ENCODE measurements at regions of chr20 and their contacts with region 1.

Region 1: GRCh38 chr20:24992487-24993205 is at the start of gene APMAP:
- DNase-seq: peak; percentile 91 to 93
- ATAC-seq: peak; percentile 81 to 88
- H3K4me3 ChIP-seq: peak within 1 kb of the TSS; percentile 85 to 92 (median 88)
- H3K27ac ChIP-seq: peak within 1 kb of the TSS; percentile 94 to 98 (median 96)
- H3K4me1 ChIP-seq: peaks cover 40 to 49% of the 10 kb centered on the region in 2 donors
- H3K27me3 ChIP-seq: no peaks in the 10 kb centered on the region
- CTCF ChIP-seq: peak in 1 of 5 experiments; percentile 6
- POLR2A ChIP-seq: peak; percentile 97 to 98
- total RNA-seq, gene APMAP: 24.2 to 108 (median 29.3) TPM

Region 2: GRCh38 chr20:24746351-24746685 is 246.3 kb before region 1 on chr20:
- in situ Hi-C with region 1: no loop called
- intact Hi-C with region 1: no loop called
- DNase-seq: no peak
- ATAC-seq: no peak
- H3K4me3 ChIP-seq: no peak overlapping the region
- H3K27ac ChIP-seq: no peak overlapping the region
- H3K4me1 ChIP-seq: no peaks in the 10 kb centered on the region
- H3K27me3 ChIP-seq: no peaks in the 10 kb centered on the region
- CTCF ChIP-seq: no peak
- POLR2A ChIP-seq: no peak

Region 3: GRCh38 chr20:24863356-24863755 is 129.3 kb before region 1 on chr20:
- in situ Hi-C with region 1: no loop called
- intact Hi-C with region 1: no loop called
- DNase-seq: no peak
- ATAC-seq: no peak
- H3K4me3 ChIP-seq: no peak overlapping the region
- H3K27ac ChIP-seq: no peak overlapping the region
- H3K4me1 ChIP-seq: no peaks in the 10 kb centered on the region
- H3K27me3 ChIP-seq: no peaks in the 10 kb centered on the region
- CTCF ChIP-seq: no peak
- POLR2A ChIP-seq: no peak

Region 4: DNA sequence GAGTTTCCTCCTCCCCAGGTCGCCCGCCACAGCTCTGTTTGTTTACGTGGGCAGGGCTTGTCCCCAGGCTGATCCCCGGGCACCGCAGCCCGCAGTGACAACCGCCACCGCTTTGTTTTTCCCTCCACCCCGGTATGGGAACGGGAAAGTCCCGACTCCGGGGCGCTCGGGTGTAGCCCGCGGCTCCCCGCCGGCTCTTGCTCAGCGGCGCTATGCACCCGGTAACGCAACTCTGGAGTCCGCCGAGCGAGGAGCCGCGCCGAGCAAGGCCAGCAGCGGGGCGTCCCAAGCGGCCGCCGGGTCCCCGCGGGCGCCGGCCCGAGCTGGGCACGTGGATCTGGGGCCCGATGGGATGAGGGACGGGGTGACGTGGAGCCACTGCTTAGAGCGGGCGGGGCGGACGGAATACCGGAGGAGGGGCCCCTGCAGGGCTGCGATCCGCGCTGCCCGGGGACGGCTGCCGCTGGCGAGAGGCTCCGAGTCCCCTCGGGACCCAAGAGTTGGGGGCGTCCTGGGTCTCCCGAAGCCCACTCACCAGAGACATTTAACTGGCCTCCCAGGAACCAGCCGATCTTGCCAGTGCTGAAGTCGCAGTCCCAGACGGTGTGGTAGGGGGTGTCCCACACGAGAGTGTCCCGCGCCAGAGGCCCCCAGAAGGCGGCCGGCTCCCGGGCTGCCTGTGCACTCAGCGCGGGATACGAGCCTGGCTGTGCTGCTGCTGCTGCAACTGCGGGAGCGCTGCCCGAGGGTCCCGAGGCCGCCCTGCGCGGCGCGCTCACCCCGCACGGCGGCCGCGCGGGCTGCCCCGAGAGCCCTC is 64.8 kb after region 1 on chr20:
- in situ Hi-C with region 1: loop called in 2 of 4 experiments (anchors 5 kb)
- intact Hi-C with region 1: no loop called
- DNase-seq: peak; percentile 67 to 74
- ATAC-seq: peak; percentile 65 to 70
- H3K4me3 ChIP-seq: peak overlapping the region; percentile 72 to 93 (median 80)
- H3K27ac ChIP-seq: peak overlapping the region; percentile 87 to 95 (median 94)
- H3K4me1 ChIP-seq: peaks cover 44 to 55% of the 10 kb centered on the region in 2 donors
- H3K27me3 ChIP-seq: no peaks in the 10 kb centered on the region
- CTCF ChIP-seq: peak in 1 of 5 experiments; percentile 5
- POLR2A ChIP-seq: peak; percentile 89 to 92

Region 5: DNA sequence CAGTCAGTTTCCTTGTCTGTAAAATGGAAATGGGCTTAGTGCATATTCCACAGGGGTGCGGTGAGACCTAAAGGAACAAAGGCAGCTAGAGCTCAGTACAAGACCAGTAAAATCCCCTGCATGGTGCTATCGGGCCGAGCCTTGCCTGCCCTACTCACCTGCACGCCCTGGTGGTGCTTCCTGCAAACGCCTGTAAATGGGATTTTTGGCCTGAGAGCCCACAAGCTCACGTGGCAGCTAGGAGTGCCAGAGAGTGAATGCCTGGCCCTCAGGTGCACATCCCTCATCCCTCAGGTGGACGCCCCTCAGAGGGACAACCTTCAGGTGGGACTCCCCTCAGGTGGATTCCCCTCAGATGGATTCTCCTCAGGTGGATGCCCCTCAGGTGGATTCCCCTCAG is 137.3 kb after region 1 on chr20:
- in situ Hi-C with region 1: no loop called
- intact Hi-C with region 1: no loop called
- DNase-seq: no peak
- ATAC-seq: no peak
- H3K4me3 ChIP-seq: no peak overlapping the region
- H3K27ac ChIP-seq: no peak overlapping the region
- H3K4me1 ChIP-seq: no peaks in the 10 kb centered on the region
- H3K27me3 ChIP-seq: no peaks in the 10 kb centered on the region
- CTCF ChIP-seq: no peak
- POLR2A ChIP-seq: no peak

Region 6: DNA sequence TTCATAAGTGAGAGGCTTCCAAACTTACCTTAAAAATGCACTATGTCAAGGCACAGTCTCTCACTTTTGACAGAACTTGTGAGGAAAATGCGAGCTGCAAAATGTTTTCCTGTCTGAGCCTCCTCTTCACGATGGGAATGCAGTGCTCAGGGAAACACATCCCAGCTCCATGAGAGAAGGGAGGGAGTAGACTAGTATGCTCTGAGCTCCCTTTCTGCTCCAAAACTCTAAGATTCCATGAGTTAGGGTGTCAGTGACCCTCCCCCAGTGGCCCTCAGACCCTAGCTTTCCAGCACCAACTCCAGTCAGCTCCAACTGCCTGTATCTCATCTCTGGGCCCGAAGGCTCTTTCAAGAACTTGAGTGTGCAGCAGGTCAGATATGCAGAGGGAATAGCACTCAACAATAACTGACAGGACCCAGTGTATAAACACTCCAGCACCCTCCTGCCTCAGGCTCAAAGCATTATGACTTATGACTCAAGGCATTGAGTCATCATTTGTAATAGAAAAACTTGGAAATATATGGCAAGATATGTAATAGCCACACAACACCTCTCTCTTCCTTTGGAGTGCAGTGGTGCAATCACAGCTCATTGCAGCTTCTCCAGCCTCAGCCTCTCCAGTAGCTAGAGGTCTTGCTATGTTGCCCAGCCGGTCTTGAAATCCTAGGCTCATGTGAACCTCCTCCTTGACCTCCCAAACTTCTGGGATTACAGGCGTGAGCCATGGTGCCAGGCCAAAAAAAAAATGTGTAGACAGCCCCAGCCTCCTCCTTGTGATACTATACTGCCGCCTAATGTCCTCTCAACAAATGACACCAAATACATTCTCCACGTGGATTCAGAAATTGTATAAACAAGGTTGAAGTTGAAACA is 186.2 kb after region 1 on chr20:
- in situ Hi-C with region 1: loop called in 2 of 4 experiments (anchors 10 to 25 kb)
- intact Hi-C with region 1: loop called (anchors 2 kb)
- DNase-seq: peak; percentile 30 to 82
- ATAC-seq: peak; percentile 94 to 96
- H3K4me3 ChIP-seq: no peak overlapping the region
- H3K27ac ChIP-seq: peak overlapping the region; percentile 39 to 63 (median 50)
- H3K4me1 ChIP-seq: no peaks in the 10 kb centered on the region
- H3K27me3 ChIP-seq: no peaks in the 10 kb centered on the region
- CTCF ChIP-seq: peak; percentile 62 to 84 (median 73)
- POLR2A ChIP-seq: no peak

Region 7: DNA sequence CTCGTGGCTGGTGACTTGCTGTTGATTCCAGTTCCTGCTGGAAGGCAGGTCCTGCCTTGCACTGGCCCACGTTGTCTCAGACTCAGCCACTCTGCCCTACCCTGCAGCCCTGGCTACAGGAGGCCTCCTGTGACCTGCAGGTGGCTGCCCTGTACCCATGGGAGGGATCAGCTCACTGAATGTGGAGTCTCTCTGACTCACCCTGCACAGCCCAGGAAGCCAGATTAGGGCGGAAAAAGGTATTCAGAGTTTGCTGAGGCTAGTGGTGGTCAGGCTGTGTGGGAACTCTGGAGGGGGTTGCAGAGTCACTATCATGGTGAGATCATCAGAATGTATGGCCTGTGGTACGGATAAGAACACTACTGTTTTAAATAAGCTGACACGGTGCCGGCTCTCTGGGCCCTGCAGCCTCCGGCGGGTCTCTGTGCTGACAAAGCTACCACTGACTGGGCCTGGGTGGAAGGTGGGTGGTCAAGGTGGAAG is 230.6 kb after region 1 on chr20:
- in situ Hi-C with region 1: loop called in 1 of 4 experiments (anchors 25 kb)
- intact Hi-C with region 1: no loop called
- DNase-seq: no peak
- ATAC-seq: no peak
- H3K4me3 ChIP-seq: no peak overlapping the region
- H3K27ac ChIP-seq: peak overlapping the region in 1 of 4 donors; percentile 13
- H3K4me1 ChIP-seq: peaks cover 33 to 39% of the 10 kb centered on the region in 2 donors
- H3K27me3 ChIP-seq: no peaks in the 10 kb centered on the region
- CTCF ChIP-seq: no peak
- POLR2A ChIP-seq: no peak

Region 8: DNA sequence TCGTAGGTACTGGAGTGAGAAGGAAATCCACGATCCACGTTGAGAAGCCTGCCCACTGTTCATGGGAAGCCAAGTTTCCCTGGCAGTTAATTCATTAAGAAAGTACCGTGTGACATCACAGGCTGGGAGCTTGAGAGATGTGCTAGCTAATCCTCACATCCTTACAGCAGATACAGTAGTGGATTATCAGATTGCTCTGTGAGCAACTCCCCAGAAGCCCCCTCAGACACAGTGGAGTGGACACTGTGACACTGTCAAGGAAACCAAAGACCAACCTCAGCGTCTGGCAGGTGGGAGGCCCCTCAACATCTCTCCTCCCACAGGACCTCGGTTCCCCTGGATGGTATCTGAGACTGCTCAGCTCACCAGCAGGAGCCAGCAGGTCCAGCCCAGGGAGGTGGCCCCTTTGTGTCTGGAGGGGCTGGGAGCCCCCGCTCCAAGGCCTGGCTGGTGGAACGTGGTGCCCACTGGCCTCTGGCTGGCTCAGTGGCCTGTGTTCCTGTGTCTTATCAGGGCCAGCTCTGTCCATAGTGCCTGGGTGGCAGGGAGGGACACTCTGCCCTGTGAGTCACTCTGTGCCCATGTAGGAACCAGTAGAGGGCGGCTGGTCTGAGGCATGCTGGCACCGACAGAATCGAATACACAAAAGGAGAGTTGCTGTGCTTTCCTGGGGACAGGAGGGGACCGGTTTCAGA is 262.5 kb after region 1 on chr20:
- in situ Hi-C with region 1: loop called in 1 of 4 experiments (anchors 25 kb)
- intact Hi-C with region 1: no loop called
- DNase-seq: peak; percentile 41 to 66
- ATAC-seq: peak; percentile 83 to 86
- H3K4me3 ChIP-seq: no peak overlapping the region
- H3K27ac ChIP-seq: peak overlapping the region in 1 of 4 donors; percentile 64
- H3K4me1 ChIP-seq: peaks cover 22 to 37% of the 10 kb centered on the region in 2 donors
- H3K27me3 ChIP-seq: no peaks in the 10 kb centered on the region
- CTCF ChIP-seq: no peak
- POLR2A ChIP-seq: no peak

Region 9: GRCh38 chr20:25390538-25391528 is 398.2 kb after region 1 on chr20 and contains the start of gene ABHD12:
- in situ Hi-C with region 1: loop called in 3 of 4 experiments (anchors 10 kb)
- intact Hi-C with region 1: loop called (anchors 2 kb)
- DNase-seq: peak; percentile 90 to 95
- ATAC-seq: peak; percentile 94 to 95
- H3K4me3 ChIP-seq: peak within 1 kb of the TSS; percentile 72 to 99 (median 84)
- H3K27ac ChIP-seq: peak within 1 kb of the TSS; percentile 71 to 86 (median 84)
- H3K4me1 ChIP-seq: peaks cover 9 to 12% of the 10 kb centered on the region in 2 donors
- H3K27me3 ChIP-seq: no peaks in the 10 kb centered on the region
- CTCF ChIP-seq: no peak
- POLR2A ChIP-seq: peak; percentile 64 to 69
- total RNA-seq, gene ABHD12: 11.9 to 18.4 (median 13.8) TPM

Region 10: GRCh38 chr20:25407311-25408169 is 414.9 kb after region 1 on chr20 and contains the start of gene GINS1:
- in situ Hi-C with region 1: loop called in 1 of 4 experiments (anchors 5 kb)
- intact Hi-C with region 1: no loop called
- DNase-seq: peak; percentile 35 to 58
- ATAC-seq: peak; percentile 80 to 84
- H3K4me3 ChIP-seq: peak within 1 kb of the TSS; percentile 63 to 72 (median 68)
- H3K27ac ChIP-seq: peak within 1 kb of the TSS in 1 of 4 donors; percentile 0
- H3K4me1 ChIP-seq: peaks cover 6 to 7% of the 10 kb centered on the region in 2 donors
- H3K27me3 ChIP-seq: no peaks in the 10 kb centered on the region
- CTCF ChIP-seq: no peak
- POLR2A ChIP-seq: no peak
- total RNA-seq, gene GINS1: 0.07 to 0.20 TPM in 2 of 4 donors, not detected in the others

Measured in gastrocnemius medialis (tissue), 4 donors.